Activated CD4-positive, alpha-beta T cell treated with anti-CD3 and anti-CD28 coated beads for 36 hours (primary cell): ENCODE measurements at regions of chr2 and their contacts with region 1.

Region 1: DNA sequence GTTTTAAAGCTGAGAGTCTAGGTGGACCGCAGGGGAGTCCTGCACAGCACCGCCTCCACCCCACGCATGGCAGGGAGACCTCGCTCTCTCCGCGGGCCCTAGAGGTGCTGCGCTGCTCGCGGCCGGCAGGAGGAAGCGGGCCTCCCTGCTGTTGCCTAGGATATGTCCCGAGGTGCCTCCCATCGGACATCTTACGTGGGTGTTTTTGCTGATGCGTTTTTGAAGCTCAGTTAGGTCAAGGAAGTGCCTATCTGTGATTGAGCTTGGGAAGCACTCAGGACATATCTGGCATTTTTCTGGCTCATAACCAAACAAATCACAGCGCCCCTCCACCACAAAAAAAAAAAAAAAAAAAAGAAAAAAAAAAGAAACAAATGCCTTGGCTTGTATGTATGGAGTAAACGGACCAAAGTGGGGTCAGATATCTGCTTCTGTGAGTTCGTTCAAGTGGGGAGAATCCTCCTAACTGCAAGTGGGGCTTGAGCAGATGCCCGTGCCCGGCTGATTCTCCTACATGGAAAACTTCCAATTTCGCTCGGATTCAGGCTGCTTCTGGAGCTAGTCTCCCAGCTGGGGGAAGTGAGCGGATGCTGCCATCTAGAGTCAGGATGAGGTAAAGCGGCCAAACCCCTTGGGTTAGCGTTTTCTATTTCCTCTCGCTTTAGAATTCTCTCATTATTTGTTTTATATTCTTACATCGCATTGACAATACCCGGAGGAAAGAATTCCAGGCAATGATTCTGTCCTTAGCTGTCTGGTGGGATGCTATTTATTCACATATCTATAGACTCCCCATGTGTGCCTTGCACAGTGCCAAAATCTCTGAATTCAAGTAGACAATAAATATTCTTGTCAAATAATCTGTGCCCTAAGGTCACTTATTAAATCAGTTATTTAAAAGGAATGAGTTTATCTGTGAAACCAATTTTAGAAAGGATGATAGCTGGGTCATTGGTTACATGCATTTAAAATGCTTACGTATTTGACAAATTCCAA is 95.3 kb downstream of the CD8B2 start:
- DNase-seq: peak; percentile 74
- ATAC-seq: peak; percentile 95
- H3K4me3 Mint-ChIP-seq: peak overlapping the region; percentile 75
- H3K27ac Mint-ChIP-seq: peak overlapping the region; percentile 74
- H3K4me1 Mint-ChIP-seq: peaks cover 14% of the 10 kb centered on the region
- H3K27me3 Mint-ChIP-seq: peaks cover 24% of the 10 kb centered on the region

Region 2: DNA sequence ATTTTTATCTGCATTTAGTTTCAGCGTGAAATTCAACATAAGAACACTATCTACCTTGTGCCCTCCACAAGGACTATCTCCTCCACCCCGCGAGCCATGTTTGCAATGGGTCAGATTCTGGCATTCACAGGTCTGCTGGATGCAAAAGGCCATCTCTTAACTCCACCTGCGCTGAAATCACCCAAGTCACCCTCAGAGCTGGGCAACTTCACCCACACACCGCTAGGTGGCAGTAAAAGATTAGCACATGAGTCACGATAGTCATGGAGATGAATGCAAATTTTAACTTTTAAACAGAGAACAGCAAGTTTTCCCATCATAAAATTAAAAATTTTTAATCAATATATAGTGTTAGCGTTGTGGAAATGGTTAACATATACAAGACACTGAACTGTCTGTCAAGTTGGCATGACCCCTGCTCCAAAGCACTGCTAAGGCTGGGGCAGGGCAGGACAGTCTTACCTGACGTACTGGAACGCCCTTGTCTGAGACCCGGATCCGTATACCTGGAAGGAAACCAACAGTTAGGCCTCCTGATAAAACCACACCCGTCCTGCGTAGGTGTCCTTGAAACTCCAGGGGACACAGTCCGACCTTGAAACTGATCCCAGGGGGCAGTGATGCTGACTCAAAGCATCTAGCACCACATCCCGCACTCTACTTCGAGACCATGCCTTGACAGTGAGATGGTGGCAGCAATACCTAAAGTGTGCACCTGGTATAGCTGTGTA is 477.9 kb before region 1 on chr2:
- CTCF ChIA-PET with region 1: interaction called, 4 read pairs
- POLR2A ChIA-PET with region 1: no interaction called
- intact Hi-C with region 1: loop called (anchors 1 to 5 kb)
- DNase-seq: peak; percentile 77
- ATAC-seq: peak; percentile 69
- H3K4me3 Mint-ChIP-seq: no peak overlapping the region
- H3K27ac Mint-ChIP-seq: no peak overlapping the region
- H3K4me1 Mint-ChIP-seq: peaks cover 2% of the 10 kb centered on the region
- H3K27me3 Mint-ChIP-seq: no peaks in the 10 kb centered on the region

Region 3: DNA sequence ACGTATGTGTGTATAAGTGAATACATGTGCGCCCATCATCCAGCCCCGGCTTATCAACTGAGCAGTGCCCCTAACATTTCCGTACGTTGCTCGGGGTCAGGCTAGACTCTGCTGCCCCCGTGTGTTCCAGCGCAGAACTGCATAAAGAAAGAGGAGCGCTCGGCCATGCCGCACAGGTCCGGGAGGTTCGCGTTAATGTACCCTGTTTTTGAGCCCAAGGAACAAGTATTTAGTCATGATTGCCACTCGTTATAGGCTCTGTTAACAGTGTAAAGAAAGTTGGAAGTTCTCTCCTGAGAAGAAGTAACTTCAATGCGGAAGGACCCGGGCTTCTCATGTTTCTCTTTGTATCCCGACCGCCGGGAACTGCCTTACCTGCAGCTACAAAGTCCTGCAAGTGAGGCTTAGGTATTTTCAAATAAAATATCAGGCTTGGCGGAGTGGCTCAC is 39.6 kb before region 1 on chr2:
- CTCF ChIA-PET with region 1: interaction called, 9 read pairs
- POLR2A ChIA-PET with region 1: no interaction called
- intact Hi-C with region 1: loop called (anchors 1 to 5 kb)
- DNase-seq: peak; percentile 86
- ATAC-seq: peak; percentile 96
- H3K4me3 Mint-ChIP-seq: peak overlapping the region; percentile 34
- H3K27ac Mint-ChIP-seq: no peak overlapping the region
- H3K4me1 Mint-ChIP-seq: peaks cover 3% of the 10 kb centered on the region
- H3K27me3 Mint-ChIP-seq: peaks cover 13% of the 10 kb centered on the region

Region 4: DNA sequence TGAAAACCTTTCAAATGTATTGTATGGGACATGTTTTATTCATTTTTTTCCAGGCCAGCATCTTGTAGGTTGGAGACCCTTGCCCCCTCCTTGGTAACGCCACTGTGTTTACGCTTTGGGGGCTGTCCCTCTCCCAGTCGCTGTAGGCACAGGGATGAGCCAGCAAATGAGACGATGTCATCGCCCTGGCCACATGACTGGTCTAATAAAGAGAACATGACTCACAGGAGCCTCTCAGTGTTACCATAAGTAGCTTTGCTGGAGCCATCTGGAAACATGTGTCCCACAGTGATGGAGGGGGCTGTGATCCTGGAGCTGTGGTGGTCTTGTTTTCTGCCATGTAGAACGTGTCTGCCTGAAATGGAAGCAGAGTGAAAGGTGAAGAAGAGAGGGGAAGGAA is 16.4 kb before region 1 on chr2:
- CTCF ChIA-PET with region 1: interaction called, 19 read pairs
- POLR2A ChIA-PET with region 1: no interaction called
- intact Hi-C with region 1: no loop called
- DNase-seq: peak; percentile 83
- ATAC-seq: peak; percentile 98
- H3K4me3 Mint-ChIP-seq: no peak overlapping the region
- H3K27ac Mint-ChIP-seq: peak overlapping the region; percentile 78
- H3K4me1 Mint-ChIP-seq: peaks cover 29% of the 10 kb centered on the region
- H3K27me3 Mint-ChIP-seq: peaks cover under 1% of the 10 kb centered on the region

Region 5: GRCh38 chr2:106596844-106597243 is 14.4 kb after region 1 on chr2:
- CTCF ChIA-PET with region 1: interaction called, 19 read pairs
- POLR2A ChIA-PET with region 1: no interaction called
- intact Hi-C with region 1: no loop called
- DNase-seq: no peak
- ATAC-seq: no peak
- H3K4me3 Mint-ChIP-seq: no peak overlapping the region
- H3K27ac Mint-ChIP-seq: no peak overlapping the region
- H3K4me1 Mint-ChIP-seq: no peaks in the 10 kb centered on the region
- H3K27me3 Mint-ChIP-seq: peaks cover 16% of the 10 kb centered on the region